ENCODE measurements at regions of chr6 and their contacts with region 1.

Region 1: DNA sequence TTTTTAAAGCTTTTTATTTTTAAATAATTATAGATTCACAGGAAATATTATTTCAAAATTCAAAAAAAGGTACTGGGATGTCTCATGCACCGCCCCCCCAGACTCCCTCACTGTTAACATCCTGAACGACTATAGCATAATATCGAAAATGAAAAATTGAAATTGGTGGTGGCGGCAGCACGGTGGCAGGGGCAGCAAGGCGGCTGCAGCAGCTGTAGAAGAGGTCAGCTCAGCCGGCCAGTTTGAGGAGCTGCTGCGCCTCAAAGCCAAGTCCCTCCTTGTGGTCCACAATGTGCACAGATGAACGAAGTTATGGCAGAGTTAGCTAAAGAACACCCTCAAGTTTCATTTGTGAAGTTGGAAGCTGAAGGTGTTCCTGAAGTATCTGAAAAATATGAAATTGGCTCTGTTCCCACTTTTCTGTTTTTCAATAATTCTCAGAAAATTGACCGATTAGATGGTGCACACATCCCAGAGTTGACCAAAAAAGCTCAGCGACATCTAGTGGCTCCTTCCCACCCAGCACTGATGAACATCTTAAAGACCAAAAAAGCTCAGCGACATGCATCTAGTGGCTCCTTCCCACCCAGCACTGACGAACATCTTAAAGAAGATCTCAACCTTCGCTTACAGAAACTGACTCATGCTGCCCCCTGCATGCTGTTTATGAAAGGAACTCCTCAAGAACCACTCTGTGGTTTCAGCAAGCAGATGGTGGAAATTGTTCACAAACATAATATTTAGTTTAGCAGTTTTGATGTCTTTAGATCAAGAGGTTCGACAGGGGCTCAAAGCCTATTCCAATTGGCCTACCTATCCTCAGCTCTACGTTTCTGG is 100.8 kb downstream of the FAM217A start:
- DNase-seq: peak; percentile 41
- CTCF ChIP-seq: peak; percentile 63

Region 2: DNA sequence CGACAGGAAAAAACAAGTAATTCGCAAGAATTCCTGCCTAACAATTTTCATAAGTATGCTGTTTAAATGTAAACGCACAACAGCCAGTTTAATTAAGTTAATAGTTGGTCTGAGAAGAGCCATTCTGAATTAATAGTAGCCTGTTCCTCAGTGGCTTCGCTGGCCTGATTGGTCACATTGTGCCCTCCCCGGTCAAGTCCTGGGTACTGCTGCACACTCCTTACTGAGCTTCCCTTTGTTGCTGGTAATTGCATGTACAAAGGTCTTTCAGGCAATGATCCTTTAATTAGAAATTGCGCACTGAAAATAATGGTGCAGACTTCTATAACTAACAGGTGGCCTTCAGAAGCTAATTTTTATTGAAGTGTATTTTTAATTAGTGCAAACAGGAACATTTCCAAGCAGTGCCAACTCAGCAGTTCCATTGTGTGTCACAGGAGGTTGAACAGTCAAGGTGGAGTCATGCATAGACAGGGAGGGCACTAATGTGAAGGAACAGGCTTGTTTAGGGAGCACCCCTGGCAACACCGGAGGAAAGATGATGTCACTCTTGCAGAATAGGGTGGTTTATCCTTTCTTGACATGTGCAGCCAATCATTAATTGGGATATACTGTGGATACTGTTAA is 428.7 kb before region 1 on chr6:
- CTCF ChIA-PET with region 1: no interaction called
- POLR2A ChIA-PET with region 1: no interaction called
- DNase-seq: no peak
- CTCF ChIP-seq: no peak

Region 3: DNA sequence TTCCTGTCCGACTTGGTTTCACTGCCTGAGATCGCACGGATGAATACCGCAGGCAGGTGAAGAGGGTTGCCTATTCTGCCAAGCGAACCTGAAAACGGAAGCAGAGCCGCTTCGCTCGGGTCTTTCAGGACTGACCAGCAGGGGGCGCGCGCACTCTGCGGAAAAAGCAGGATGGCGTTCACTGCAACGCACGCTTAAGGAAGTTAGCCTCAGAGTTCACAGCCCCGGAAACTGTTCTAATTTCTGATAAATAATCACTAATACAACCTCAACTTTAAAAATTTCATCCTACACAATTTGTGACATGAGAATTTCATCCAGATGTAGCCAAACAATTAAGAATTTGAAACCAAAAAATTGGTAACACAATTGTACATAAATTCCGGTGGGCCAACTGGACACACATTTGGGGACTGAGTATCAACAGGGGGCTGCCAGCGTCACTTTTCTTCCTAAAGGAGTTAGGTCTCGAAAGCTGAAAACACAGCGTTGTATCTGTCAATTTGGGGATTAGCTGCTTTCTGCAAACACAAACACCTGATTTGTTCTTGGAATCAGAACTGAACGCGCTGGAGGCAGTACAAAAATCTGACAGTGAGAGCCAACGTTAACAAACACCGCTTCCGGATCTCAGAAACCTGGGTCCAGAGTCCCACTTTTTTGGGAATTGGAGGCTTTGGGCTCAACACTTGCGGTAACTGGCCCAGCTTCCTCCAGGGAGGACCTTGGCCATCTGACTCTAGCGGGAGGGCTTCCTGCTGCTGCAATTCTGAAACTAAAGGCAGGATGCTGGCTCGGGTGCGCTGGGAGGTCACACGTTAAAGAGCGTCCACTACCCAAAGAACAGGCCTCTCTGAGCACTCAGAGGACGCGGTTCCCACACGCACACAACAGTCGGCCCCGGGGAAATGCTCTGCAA is 235.4 kb before region 1 on chr6:
- CTCF ChIA-PET with region 1: interaction called, 113 read pairs
- POLR2A ChIA-PET with region 1: no interaction called
- DNase-seq: peak; percentile 85
- CTCF ChIP-seq: peak; percentile 90

Region 4: DNA sequence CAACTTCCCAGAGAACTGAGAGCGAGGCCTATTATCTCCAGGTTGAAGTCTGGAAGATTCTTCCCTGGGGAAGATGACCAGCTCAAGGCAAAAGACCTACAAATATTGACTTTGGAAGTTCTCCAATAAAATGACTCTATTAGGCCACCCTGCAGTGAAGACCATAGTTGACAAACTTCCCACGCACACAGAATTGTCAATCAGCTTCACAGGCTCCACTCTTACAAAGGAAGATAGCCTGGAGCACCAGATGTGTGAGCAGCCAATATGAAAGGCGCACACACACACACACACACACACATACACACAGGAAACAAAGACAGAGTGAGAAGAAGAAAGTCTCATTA is 15.2 kb before region 1 on chr6:
- CTCF ChIA-PET with region 1: interaction called, 12 read pairs
- POLR2A ChIA-PET with region 1: no interaction called
- DNase-seq: no peak
- CTCF ChIP-seq: no peak

Region 5: DNA sequence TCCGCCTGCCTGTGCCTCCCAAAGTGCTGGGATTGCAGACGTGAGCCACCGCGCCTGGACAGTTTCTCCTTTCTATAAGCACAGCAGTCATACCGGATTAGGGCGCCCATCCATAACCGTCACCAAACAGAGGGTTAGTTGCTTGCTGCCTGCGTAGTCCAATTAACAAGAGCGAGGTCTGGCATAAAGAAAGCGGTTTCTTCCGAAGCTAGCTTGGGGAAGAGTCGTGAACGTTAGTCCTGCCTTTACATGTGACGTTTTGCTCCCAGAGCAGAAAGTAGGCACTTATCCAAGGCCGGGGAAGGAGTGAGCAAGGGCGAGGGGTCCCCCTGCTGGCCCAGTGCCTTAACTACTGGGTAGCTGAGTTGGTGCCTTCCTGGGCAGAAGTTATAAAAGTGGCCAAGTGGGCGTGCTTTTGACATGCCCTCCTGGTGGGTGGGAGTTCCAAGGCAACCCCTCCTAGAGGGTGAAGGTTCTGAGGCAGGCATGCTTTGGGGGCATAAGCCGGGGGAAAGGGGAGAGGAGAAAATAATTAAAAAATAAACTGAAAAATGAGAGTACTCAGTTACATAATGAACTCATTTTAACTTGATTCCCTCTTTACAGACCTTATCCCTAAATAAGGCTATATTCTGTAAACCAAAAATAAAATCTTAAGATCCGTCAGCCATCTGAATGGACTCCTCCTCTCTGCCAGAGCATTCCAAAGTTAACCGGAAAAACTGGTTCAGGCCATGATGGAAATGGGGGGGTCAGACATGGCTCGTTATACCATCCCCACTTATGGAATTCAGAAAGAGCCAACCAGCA is 12.8 kb after region 1 on chr6:
- CTCF ChIA-PET with region 1: interaction called, 21 read pairs
- POLR2A ChIA-PET with region 1: no interaction called
- DNase-seq: peak; percentile 73
- CTCF ChIP-seq: peak; percentile 88

Region 6: GRCh38 chr6:3997177-3997770 is 19.2 kb after region 1 on chr6:
- CTCF ChIA-PET with region 1: interaction called, 21 read pairs
- POLR2A ChIA-PET with region 1: no interaction called
- DNase-seq: no peak
- CTCF ChIP-seq: no peak